PC-9 (cell line): ENCODE measurements at regions of chr14 and their contacts with region 1.

Region 1: GRCh38 chr14:80231702-80232101 is 20.4 kb upstream of the DIO2 start:
- DNase-seq: no peak
- H3K4me3 ChIP-seq: no peak overlapping the region
- H3K27ac ChIP-seq: no peak overlapping the region
- H3K4me1 ChIP-seq: no peaks in the 10 kb centered on the region
- H3K27me3 ChIP-seq: no peaks in the 10 kb centered on the region
- CTCF ChIP-seq: no peak

Region 2: DNA sequence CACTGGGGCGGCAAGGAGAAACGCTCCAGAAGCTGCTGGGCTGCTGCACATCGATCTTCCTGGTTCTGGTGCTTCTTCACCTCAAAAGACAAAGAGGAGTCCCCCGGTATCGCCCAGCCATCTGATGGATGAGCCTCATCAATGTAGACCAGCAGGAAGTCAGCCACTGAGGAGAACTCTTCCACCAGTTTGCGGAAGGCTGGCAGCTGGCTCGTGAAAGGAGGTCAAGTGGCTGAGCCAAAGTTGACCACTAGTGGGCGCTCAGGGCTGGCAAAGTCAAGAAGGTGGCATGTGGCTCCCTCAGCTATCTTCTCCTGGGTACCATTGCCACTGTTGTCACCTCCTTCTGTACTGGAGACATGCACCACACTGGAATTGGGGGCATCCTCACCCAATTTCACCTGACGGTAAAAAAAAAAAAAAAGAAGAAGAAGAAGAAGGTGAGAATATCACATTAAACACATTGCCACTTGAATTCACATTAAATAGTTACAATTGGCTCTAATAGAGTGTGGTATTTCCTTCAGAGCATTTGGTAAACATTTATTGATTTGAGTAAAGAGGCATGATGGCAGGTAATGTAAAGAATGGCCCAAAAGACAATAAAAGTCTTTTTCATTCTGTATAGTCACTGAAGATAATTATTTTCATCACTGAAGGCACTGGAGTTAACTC is 28.7 kb before region 1 on chr14:
- CTCF ChIA-PET with region 1: no interaction called
- POLR2A ChIA-PET with region 1: interaction called, 10 read pairs
- intact Hi-C with region 1: no loop called
- DNase-seq: no peak
- H3K4me3 ChIP-seq: no peak overlapping the region
- H3K27ac ChIP-seq: no peak overlapping the region
- H3K4me1 ChIP-seq: no peaks in the 10 kb centered on the region
- H3K27me3 ChIP-seq: no peaks in the 10 kb centered on the region
- CTCF ChIP-seq: peak; percentile 36; the same call in 1 of the 2 replicates

Region 3: GRCh38 chr14:80215670-80216581 is 15.8 kb before region 1 on chr14:
- CTCF ChIA-PET with region 1: no interaction called
- POLR2A ChIA-PET with region 1: no interaction called
- intact Hi-C with region 1: no loop called
- DNase-seq: no peak
- H3K4me3 ChIP-seq: no peak overlapping the region
- H3K27ac ChIP-seq: no peak overlapping the region
- H3K4me1 ChIP-seq: no peaks in the 10 kb centered on the region
- H3K27me3 ChIP-seq: no peaks in the 10 kb centered on the region
- CTCF ChIP-seq: no peak

Region 4: GRCh38 chr14:80291101-80291500 is 59.4 kb after region 1 on chr14:
- CTCF ChIA-PET with region 1: no interaction called
- POLR2A ChIA-PET with region 1: no interaction called
- intact Hi-C with region 1: no loop called
- DNase-seq: no peak
- H3K4me3 ChIP-seq: no peak overlapping the region
- H3K27ac ChIP-seq: no peak overlapping the region
- H3K4me1 ChIP-seq: 0 out of 2 replicates have a peak, but pooled peaks cover 4% of the 10 kb centered on the region
- H3K27me3 ChIP-seq: no peaks in the 10 kb centered on the region
- CTCF ChIP-seq: no peak

Region 5: DNA sequence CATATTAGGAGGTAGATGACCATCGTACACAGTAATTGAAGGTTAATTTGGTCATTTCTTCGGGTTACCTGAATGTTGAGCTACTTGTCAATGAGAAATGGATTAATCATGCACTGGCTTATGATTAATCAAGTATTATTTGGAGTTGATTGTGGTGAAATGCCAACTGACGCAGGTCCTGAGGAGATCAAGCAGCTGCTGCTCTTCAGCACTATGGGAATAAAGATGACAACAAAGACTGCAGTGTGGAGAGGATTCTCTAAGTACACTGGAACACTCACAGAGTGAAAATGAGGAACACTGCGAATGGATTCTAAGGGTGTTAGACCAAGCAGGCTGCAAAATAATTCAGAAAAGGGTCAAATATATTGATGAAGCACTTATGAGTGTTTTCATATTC is 182.4 kb after region 1 on chr14:
- CTCF ChIA-PET with region 1: no interaction called
- POLR2A ChIA-PET with region 1: no interaction called
- intact Hi-C with region 1: no loop called
- DNase-seq: no peak
- H3K4me3 ChIP-seq: no peak overlapping the region
- H3K27ac ChIP-seq: no peak overlapping the region
- H3K4me1 ChIP-seq: no peaks in the 10 kb centered on the region
- H3K27me3 ChIP-seq: no peaks in the 10 kb centered on the region
- CTCF ChIP-seq: no peak